Heart right ventricle (tissue), 16 donors: ENCODE measurements at regions of chr16 and their contacts with region 1.

Region 1: DNA sequence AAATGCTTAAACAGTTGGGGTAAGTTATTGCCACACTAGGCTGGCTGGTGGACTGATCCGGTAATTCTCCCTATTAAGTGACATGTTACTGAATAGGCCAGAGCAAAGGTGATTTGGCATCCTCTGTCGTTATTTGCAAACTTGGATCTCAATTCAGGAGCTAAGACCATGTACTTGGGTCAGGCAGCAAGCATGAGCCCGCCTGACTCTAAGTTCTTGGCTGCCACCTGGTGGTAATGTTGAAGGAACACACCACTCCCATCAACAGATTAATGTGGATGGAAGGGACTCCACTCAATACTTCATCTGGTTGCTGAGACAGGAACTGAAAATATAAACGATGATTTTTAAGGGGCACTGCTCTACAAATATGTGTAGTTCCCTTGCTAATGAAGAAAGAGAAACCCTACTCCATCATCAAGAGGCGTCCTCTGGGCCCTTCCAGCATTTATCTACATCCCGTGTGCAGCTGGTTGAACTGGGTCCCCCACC is 70.8 kb downstream of the EMP2 start:
- DNase-seq: peak in 1 of 2 donors; percentile 77
- ATAC-seq: peak; percentile 82 to 93 (median 88)
- H3K4me3 ChIP-seq: no peak overlapping the region
- H3K27ac ChIP-seq: no peak overlapping the region
- H3K4me1 ChIP-seq: peaks cover 0 to 9% (median 8%) of the 10 kb centered on the region in 9 donors
- H3K27me3 ChIP-seq: no peaks in the 10 kb centered on the region
- CTCF ChIP-seq: peak; percentile 74 to 89 (median 80)

Region 2: GRCh38 chr16:9258423-9259051 is 1251.0 kb before region 1 on chr16:
- intact Hi-C with region 1: loop called in 1 of 10 experiments (anchors 10 kb)
- DNase-seq: peak; percentile 13 to 17
- ATAC-seq: peak in 3 of 8 donors; percentile 49 to 66 (median 65)
- H3K4me3 ChIP-seq: no peak overlapping the region
- H3K27ac ChIP-seq: no peak overlapping the region
- H3K4me1 ChIP-seq: peaks cover 0 to 7% (median 0%) of the 10 kb centered on the region in 9 donors
- H3K27me3 ChIP-seq: peaks cover 0 to 21% (median 0%) of the 10 kb centered on the region in 7 donors
- CTCF ChIP-seq: peak; percentile 57 to 78 (median 70)

Region 3: GRCh38 chr16:10256784-10257641 is 252.6 kb before region 1 on chr16:
- intact Hi-C with region 1: loop called (anchors 1 to 10 kb)
- DNase-seq: peak; percentile 17 to 34
- ATAC-seq: peak; percentile 27 to 75 (median 60)
- H3K4me3 ChIP-seq: no peak overlapping the region
- H3K27ac ChIP-seq: no peak overlapping the region
- H3K4me1 ChIP-seq: peaks cover 0 to 13% (median 0%) of the 10 kb centered on the region in 9 donors
- H3K27me3 ChIP-seq: peaks cover 0 to 21% (median 9%) of the 10 kb centered on the region in 7 donors
- CTCF ChIP-seq: peak; percentile 46 to 85 (median 73)

Region 4: DNA sequence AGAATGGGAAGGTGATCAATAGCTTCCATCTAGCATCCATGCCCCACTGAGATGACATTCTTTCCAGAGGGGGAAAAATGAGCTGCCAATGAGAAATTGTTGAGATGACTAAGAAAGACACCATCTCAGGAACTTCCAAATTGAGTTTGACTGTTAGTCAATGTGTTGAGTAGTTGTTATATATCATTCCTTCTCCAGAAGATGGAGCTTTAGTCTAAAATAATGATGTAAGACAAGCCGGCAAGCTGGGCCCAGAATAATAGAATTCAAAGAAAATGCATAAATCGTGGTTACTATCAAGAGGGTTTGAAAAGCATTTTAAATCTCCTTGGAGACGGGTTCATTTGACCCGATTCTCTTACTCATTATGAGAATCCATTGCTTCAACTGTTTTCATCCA is 194.8 kb before region 1 on chr16:
- intact Hi-C with region 1: loop called (anchors 1 to 5 kb)
- DNase-seq: no peak
- ATAC-seq: peak in 2 of 8 donors; percentile 39 to 55
- H3K4me3 ChIP-seq: no peak overlapping the region
- H3K27ac ChIP-seq: no peak overlapping the region
- H3K4me1 ChIP-seq: no peaks in the 10 kb centered on the region
- H3K27me3 ChIP-seq: no peaks in the 10 kb centered on the region
- CTCF ChIP-seq: peak in 6 of 9 donors; percentile 32 to 59 (median 52)

Region 5: GRCh38 chr16:10447289-10447688 is 62.3 kb before region 1 on chr16:
- intact Hi-C with region 1: no loop called
- DNase-seq: no peak
- ATAC-seq: no peak
- H3K4me3 ChIP-seq: no peak overlapping the region
- H3K27ac ChIP-seq: no peak overlapping the region
- H3K4me1 ChIP-seq: no peaks in the 10 kb centered on the region
- H3K27me3 ChIP-seq: no peaks in the 10 kb centered on the region
- CTCF ChIP-seq: no peak

Region 6: DNA sequence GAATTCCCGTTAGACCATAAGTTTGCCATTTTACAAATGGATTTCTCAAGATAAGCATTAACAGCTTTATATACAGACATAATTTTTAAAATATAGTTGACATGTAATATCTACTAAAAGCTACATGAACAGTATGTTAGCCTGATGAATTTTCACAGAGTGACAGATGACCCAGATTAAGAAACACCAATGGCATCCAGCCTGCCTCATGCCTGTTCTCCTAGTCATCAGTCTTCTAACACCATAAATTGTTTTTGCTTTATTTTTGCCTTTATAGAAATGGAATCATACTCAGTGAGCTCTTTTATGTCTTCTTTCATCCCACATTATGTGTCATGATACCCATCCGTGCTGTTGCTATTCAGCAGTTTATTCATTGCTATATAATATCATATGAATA is 43.8 kb before region 1 on chr16:
- intact Hi-C with region 1: no loop called
- DNase-seq: no peak
- ATAC-seq: no peak
- H3K4me3 ChIP-seq: no peak overlapping the region
- H3K27ac ChIP-seq: no peak overlapping the region
- H3K4me1 ChIP-seq: peaks cover 0 to 8% (median 0%) of the 10 kb centered on the region in 9 donors
- H3K27me3 ChIP-seq: no peaks in the 10 kb centered on the region
- CTCF ChIP-seq: no peak

Region 7: DNA sequence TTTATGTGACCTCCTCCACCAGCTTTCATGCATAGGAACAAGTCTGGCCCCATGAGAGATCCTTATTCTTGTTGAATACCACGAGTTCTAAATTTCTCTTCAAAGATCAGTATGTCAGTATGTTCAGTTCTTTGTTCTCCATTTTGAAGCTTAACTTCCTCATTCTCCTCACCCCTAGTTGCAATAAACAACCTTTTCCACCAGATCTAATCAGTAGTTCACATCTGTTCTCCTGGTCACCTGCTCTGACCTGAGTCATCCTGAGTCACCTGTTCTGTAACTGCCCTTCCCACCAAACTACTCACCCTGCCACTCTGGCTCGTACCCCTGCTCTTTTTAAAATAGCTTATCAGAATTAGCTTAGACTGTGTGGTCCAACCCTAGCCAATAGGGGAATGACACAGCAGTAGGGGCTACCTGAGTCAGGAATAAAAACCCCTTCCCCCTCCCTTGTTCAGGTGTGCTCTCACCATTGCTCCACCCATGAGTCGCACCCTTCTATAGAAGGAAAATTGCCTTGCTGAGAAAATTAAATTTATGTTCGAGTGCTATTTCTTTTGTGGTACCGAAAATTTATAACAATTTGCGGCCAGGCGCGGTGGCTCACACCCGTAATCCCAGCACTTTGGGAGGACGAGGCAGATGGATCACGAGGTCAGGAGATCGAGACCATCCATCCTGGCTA is 23.7 kb before region 1 on chr16:
- intact Hi-C with region 1: no loop called
- DNase-seq: no peak
- ATAC-seq: no peak
- H3K4me3 ChIP-seq: no peak overlapping the region
- H3K27ac ChIP-seq: no peak overlapping the region
- H3K4me1 ChIP-seq: peaks cover 0 to 5% (median 0%) of the 10 kb centered on the region in 9 donors
- H3K27me3 ChIP-seq: no peaks in the 10 kb centered on the region
- CTCF ChIP-seq: no peak